Calu3 (cell line): ENCODE measurements at regions of chrX and their contacts with region 1.

Region 1: GRCh38 chrX:137646472-137646871 is 80.5 kb downstream of the ZIC3 start:
- DNase-seq: no peak
- H3K4me3 Mint-ChIP-seq: no peak overlapping the region
- H3K27ac Mint-ChIP-seq: no peak overlapping the region
- H3K4me1 Mint-ChIP-seq: no peaks in the 10 kb centered on the region
- H3K27me3 Mint-ChIP-seq: no peaks in the 10 kb centered on the region
- CTCF ChIP-seq: no peak

Region 2: DNA sequence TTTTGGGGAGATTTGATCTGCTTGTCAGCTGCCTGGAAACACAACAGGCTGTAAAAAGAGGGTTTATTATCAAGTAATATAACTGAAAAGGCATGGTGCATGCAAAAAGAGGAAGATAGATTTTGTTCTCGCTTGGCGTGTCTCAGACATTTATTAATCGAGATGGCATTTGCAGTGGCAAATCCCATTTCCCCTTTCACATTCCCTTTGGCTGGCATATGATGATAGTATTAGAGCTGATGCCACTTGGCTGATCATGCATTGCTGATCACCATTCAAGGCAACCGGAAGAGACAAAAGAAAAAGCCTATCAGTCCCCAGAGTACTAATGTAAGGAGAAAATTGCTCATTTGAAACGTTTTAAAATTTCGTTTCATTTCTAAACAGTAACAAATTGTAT is 21.3 kb after region 1 on chrX:
- CTCF ChIA-PET with region 1: no interaction called
- intact Hi-C with region 1: loop called (anchors 1 kb)
- DNase-seq: no peak
- H3K4me3 Mint-ChIP-seq: no peak overlapping the region
- H3K27ac Mint-ChIP-seq: no peak overlapping the region
- H3K4me1 Mint-ChIP-seq: no peaks in the 10 kb centered on the region
- H3K27me3 Mint-ChIP-seq: no peaks in the 10 kb centered on the region
- CTCF ChIP-seq: no peak